Calu3 (cell line): ENCODE measurements at regions of chr2 and their contacts with region 1.

Region 1: DNA sequence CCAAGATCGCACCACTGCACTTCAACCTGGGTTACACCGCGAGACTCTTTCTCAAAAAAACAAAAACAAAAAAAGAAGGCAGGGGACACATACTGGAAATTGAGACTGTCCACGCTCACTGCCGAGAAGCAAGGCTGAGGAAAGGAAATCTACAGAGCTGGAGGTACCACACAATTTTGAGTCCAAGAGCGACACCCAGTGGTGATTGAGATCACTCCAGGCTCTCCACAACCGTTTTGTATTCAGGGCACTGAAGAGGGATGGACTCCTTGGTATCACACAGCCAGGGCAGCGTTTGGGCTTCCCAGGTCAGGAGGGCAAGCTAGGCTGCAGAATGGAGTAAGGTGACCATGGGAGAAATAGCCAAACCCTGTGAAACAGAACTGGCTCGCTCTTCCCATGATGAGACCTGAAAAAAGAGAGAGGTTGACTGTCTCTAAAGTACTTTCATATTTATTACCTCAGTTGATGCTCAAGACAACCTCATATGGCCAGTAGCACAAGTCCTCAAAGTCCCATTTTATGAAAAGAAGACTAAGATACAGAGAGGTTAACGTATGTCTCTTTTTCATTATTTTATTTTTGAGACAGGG is 74.5 kb upstream of the YPEL5 start:
- DNase-seq: peak; percentile 79
- H3K4me3 Mint-ChIP-seq: no peak overlapping the region
- H3K27ac Mint-ChIP-seq: no peak overlapping the region
- H3K4me1 Mint-ChIP-seq: no peaks in the 10 kb centered on the region
- H3K27me3 Mint-ChIP-seq: peaks cover 81% of the 10 kb centered on the region
- CTCF ChIP-seq: peak; percentile 79

Region 2: DNA sequence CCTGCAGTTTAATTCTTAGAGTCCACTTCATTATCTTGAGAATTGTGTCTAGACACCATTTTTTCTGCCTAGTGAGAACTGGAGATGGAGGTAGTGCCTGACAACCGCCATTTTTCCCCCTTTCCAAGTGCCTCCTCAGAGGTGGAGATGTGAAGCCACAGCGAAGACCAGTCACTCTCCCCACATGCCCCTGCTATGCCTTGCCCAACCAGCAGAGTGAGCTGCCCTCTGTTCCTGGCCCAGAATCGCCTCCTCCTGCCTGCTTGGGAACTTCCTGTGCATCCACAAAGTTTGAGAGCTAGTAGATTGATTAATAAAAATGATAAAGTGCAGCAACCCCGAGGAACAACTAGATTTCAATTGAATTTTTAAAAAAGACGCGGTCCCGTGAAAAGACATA is 833.8 kb before region 1 on chr2:
- CTCF ChIA-PET with region 1: interaction called, 4 read pairs
- intact Hi-C with region 1: loop called (anchors 5 kb)
- DNase-seq: peak; percentile 69
- H3K4me3 Mint-ChIP-seq: no peak overlapping the region
- H3K27ac Mint-ChIP-seq: no peak overlapping the region
- H3K4me1 Mint-ChIP-seq: peaks cover 10% of the 10 kb centered on the region
- H3K27me3 Mint-ChIP-seq: peaks cover 96% of the 10 kb centered on the region
- CTCF ChIP-seq: peak; percentile 63

Region 3: GRCh38 chr2:29309090-29310029 is 763.0 kb before region 1 on chr2:
- CTCF ChIA-PET with region 1: interaction called, 3 read pairs
- intact Hi-C with region 1: loop called (anchors 5 kb)
- DNase-seq: peak; percentile 72
- H3K4me3 Mint-ChIP-seq: no peak overlapping the region
- H3K27ac Mint-ChIP-seq: no peak overlapping the region
- H3K4me1 Mint-ChIP-seq: no peaks in the 10 kb centered on the region
- H3K27me3 Mint-ChIP-seq: peaks cover 92% of the 10 kb centered on the region
- CTCF ChIP-seq: peak; percentile 69

Region 4: DNA sequence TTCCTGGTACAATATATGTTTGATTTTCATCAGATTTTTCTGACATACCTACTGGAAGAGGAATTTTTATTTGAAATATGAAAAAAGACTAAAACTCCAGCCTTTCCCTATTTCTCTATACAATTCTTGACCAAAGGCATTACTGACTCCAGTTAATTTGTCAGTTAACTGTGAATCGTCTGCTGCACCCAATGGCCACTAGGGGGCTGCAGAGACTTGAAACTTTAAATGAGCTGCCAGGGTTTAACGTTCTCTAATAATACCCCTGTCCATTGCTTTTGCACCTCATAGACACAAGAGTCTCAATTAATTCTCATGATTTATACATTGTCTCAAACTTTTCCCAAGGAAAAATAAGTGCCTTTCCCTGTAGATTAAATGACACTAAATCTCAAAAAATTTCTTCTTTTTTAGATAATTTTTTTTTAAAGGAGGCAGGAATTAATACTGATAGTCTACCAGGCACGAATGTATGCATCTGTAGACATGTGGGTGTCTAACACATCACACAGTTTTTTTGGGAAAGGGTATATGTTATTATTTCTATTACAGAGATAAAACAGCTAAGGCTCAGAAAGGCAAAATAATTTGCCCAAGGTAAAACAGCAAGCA is 149.1 kb before region 1 on chr2:
- CTCF ChIA-PET with region 1: interaction called, 18 read pairs
- intact Hi-C with region 1: loop called (anchors 1 kb)
- DNase-seq: peak; percentile 62
- H3K4me3 Mint-ChIP-seq: no peak overlapping the region
- H3K27ac Mint-ChIP-seq: no peak overlapping the region
- H3K4me1 Mint-ChIP-seq: no peaks in the 10 kb centered on the region
- H3K27me3 Mint-ChIP-seq: peaks cover 94% of the 10 kb centered on the region
- CTCF ChIP-seq: peak; percentile 74

Region 5: DNA sequence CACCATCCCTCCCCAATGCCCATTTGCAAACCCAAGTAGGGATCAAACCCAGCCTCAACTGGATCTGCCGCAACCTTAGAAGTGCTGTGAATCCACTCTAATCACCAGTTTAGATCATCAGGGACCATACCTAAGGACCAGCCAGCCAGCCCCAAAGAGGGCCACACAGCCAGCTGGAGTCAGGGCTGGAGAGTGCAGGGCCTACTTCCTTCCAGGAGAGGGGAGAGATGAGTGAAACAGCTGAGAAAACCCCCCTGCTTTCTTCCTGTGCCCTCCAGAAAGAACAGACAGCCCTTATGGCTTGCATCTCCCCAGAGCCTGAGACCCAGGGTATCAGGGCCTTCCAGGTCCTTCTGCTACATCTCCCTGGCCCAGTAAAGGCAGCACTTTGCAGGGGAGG is 100.3 kb after region 1 on chr2:
- CTCF ChIA-PET with region 1: no interaction called
- intact Hi-C with region 1: no loop called
- DNase-seq: no peak
- H3K4me3 Mint-ChIP-seq: no peak overlapping the region
- H3K27ac Mint-ChIP-seq: no peak overlapping the region
- H3K4me1 Mint-ChIP-seq: no peaks in the 10 kb centered on the region
- H3K27me3 Mint-ChIP-seq: peaks cover 38% of the 10 kb centered on the region
- CTCF ChIP-seq: no peak